ENCODE measurements at regions of chr7 and their contacts with region 1.

Region 1: DNA sequence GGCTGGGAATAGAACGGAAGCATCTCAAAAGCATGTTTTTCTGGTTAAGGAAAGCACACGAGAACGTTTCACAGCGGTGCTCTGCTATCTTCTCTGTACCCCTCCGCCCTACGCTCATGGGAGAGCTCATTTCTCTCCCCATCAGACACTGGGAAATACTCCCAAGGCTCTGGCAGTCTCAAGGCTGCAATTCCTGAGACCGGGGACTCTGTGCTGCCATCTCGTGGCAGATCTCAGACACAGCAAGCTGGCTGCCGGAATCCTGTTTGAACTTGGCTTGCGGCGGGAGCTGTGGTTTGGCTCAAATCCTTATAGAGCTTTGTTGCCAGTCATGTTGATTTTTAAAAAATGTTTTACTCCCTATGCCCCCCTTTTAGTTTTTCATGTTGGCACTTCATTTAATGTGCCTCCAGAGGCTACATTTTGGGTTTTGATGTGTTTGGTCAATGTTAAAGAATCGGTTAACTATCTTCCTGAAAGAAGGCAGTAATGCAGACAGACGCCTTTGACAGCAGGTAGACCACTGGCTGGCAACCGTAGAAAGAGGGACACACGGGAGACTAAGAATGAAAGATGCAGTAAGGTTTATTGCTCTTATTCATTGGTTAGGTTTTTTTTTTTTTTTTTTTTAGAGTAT is 27.6 kb downstream of the BMPER start:
- DNase-seq: no peak
- ATAC-seq: peak; percentile 79
- H3K4me3 ChIP-seq: no peak overlapping the region
- H3K27ac ChIP-seq: no peak overlapping the region
- H3K4me1 ChIP-seq: no peaks in the 10 kb centered on the region
- H3K27me3 ChIP-seq: peaks cover 1% of the 10 kb centered on the region in 2 experiments; a peak in 3 of 4 replicates
- CTCF ChIP-seq: peak; percentile 89 to 94 (median 90)
- EP300 ChIP-seq: no peak
- POLR2A ChIP-seq: no peak
- RAD21 ChIP-seq: peak; percentile 73

Region 2: GRCh38 chr7:33185786-33186185 is 747.2 kb before region 1 on chr7:
- CTCF ChIA-PET with region 1: interaction called, 49 read pairs
- POLR2A ChIA-PET with region 1: no interaction called
- RAD21 ChIA-PET with region 1: interaction called, 11 read pairs
- SMC1A ChIA-PET with region 1: interaction called, 4 read pairs
- in situ Hi-C with region 1: loop called (anchors 5 kb)
- intact Hi-C with region 1: loop called (anchors 2 kb)
- DNase-seq: no peak
- ATAC-seq: peak; percentile 84
- H3K4me3 ChIP-seq: no peak overlapping the region
- H3K27ac ChIP-seq: no peak overlapping the region
- H3K4me1 ChIP-seq: no peaks in the 10 kb centered on the region
- H3K27me3 ChIP-seq: no peaks in the 10 kb centered on the region
- CTCF ChIP-seq: peak; percentile 51 to 85 (median 66); a peak in 4 of 6 replicates
- EP300 ChIP-seq: no peak
- POLR2A ChIP-seq: no peak
- RAD21 ChIP-seq: peak; percentile 80

Region 3: GRCh38 chr7:33334349-33334748 is 598.6 kb before region 1 on chr7:
- CTCF ChIA-PET with region 1: interaction called, 20 read pairs
- POLR2A ChIA-PET with region 1: no interaction called
- RAD21 ChIA-PET with region 1: no interaction called
- SMC1A ChIA-PET with region 1: interaction called, 3 read pairs
- in situ Hi-C with region 1: no loop called
- intact Hi-C with region 1: no loop called
- DNase-seq: no peak
- ATAC-seq: peak; percentile 46; the same call in 2 of the 3 replicates
- H3K4me3 ChIP-seq: no peak overlapping the region
- H3K27ac ChIP-seq: no peak overlapping the region
- H3K4me1 ChIP-seq: no peaks in the 10 kb centered on the region
- H3K27me3 ChIP-seq: no peaks in the 10 kb centered on the region
- CTCF ChIP-seq: peak; percentile 24 to 49 (median 37); a peak in 5 of 6 replicates
- EP300 ChIP-seq: no peak
- POLR2A ChIP-seq: no peak
- RAD21 ChIP-seq: peak; percentile 57

Region 4: DNA sequence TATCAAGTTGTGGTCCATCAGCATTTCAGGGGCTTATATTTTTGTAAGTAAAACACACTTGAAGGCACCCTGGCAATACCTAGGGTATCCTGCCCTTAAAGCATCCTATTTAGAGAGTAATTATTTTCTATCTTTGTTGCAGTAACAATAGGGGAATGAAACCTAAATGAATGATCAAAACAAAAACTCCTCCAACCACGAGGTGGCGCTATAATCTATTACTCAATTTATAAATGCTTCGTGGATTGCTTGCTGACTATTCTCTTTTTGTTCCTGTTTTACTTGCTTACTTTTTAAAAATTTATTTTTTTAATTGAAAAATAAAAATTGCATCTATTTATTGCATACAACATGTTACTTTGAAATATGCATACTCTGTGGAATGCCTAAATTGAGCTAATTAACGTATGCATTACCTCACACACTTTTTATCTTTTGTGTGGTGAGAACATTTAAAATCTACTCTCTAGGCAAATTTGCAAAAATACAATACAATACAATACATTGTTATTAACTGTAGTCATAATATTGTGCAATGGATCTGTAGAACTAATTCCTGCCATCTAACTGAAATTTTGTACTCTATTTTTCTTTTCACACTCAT is 175.3 kb before region 1 on chr7:
- CTCF ChIA-PET with region 1: interaction called, 33 read pairs
- POLR2A ChIA-PET with region 1: no interaction called
- RAD21 ChIA-PET with region 1: interaction called, 6 read pairs
- SMC1A ChIA-PET with region 1: interaction called, 8 read pairs
- in situ Hi-C with region 1: no loop called
- intact Hi-C with region 1: loop called (anchors 5 kb)
- DNase-seq: no peak
- ATAC-seq: peak; percentile 31; the same call in 1 of the 3 replicates
- H3K4me3 ChIP-seq: no peak overlapping the region
- H3K27ac ChIP-seq: no peak overlapping the region
- H3K4me1 ChIP-seq: no peaks in the 10 kb centered on the region; the same call in 1 of the 2 replicates
- H3K27me3 ChIP-seq: peaks cover 0 to 1% of the 10 kb centered on the region in 2 experiments; a peak in 1 of 4 replicates
- CTCF ChIP-seq: peak; percentile 45 to 50 (median 49); a peak in 5 of 6 replicates
- EP300 ChIP-seq: no peak
- POLR2A ChIP-seq: no peak
- RAD21 ChIP-seq: peak; percentile 52

Region 5: GRCh38 chr7:33950047-33950714 is 17.2 kb after region 1 on chr7:
- CTCF ChIA-PET with region 1: interaction called, 10 read pairs
- POLR2A ChIA-PET with region 1: no interaction called
- RAD21 ChIA-PET with region 1: no interaction called
- SMC1A ChIA-PET with region 1: interaction called, 3 read pairs
- in situ Hi-C with region 1: no loop called
- intact Hi-C with region 1: no loop called
- DNase-seq: no peak
- ATAC-seq: no peak; the same call in 2 of the 3 replicates
- H3K4me3 ChIP-seq: no peak overlapping the region
- H3K27ac ChIP-seq: no peak overlapping the region
- H3K4me1 ChIP-seq: no peaks in the 10 kb centered on the region
- H3K27me3 ChIP-seq: no peaks in the 10 kb centered on the region
- CTCF ChIP-seq: no peak
- EP300 ChIP-seq: no peak
- POLR2A ChIP-seq: no peak
- RAD21 ChIP-seq: no peak